ENCODE measurements at regions of chr3 and their contacts with region 1.

Region 1: GRCh38 chr3:123652346-123652984 is 67.6 kb upstream of the HACD2 start:
- DNase-seq: peak; percentile 76 to 91 (median 84)
- H3K4me3 ChIP-seq: no peak overlapping the region
- H3K27ac ChIP-seq: peak overlapping the region in 2 of 5 donors; percentile 67 to 80
- H3K4me1 ChIP-seq: peaks cover 4 to 10% of the 10 kb centered on the region in 2 donors
- H3K27me3 ChIP-seq: no peaks in the 10 kb centered on the region
- CTCF ChIP-seq: peak; percentile 77 to 94 (median 92)
- POLR2A ChIP-seq: no peak

Region 2: GRCh38 chr3:123480428-123480827 is 172.0 kb before region 1 on chr3:
- intact Hi-C with region 1: no loop called
- DNase-seq: no peak
- H3K4me3 ChIP-seq: no peak overlapping the region
- H3K27ac ChIP-seq: no peak overlapping the region
- H3K4me1 ChIP-seq: no peaks in the 10 kb centered on the region
- H3K27me3 ChIP-seq: no peaks in the 10 kb centered on the region
- CTCF ChIP-seq: no peak
- POLR2A ChIP-seq: no peak

Region 3: DNA sequence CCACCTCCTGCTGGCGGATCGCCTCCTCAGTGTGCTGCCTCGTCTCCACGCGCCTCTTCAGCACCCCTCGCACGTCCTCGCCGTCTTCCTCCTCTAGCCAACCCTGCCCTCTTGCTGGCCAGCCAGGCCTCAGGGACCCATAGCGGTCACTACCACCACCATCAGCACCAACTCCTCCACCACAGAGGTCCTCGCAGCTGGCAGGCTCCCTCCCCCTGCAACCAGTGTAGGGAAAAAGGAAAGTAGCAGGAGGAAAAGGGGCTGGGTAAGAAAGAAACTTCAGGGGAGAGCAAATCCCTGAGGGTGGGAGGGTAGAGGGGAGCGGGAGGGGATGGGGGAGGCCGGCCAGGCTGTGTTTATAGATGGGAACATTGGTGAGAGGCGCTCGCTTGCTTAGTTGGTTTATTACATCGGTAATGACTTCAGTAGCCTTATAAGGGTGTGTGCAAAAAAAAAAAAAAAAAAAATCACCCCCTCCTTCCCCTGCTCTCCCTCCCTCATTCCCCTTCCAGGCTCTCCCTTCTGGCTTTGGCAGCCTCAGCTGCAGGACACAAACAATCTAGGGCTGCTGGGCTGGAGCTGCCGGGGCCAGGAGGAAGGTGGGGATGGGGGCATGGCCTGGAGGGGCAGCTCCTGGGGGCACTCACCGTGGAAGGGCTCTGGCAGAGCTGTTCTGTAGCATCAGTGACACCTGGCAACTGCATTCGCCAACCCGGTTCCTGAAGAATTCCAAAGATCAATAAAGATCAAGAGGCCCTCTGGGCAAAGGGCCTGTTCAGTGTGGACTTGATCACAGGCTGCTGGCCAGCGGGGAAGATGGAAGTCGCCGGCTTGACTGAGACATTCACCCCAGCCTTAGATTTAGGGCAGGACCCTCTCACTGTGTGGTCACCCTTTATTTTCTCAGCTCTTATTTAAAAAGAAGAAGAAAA is 48.6 kb after region 1 on chr3:
- intact Hi-C with region 1: loop called (anchors 5 kb)
- DNase-seq: peak in 1 of 7 donors; percentile 43
- H3K4me3 ChIP-seq: peak overlapping the region in 1 of 4 donors; percentile 48
- H3K27ac ChIP-seq: peak overlapping the region in 3 of 5 donors; percentile 52 to 76 (median 62)
- H3K4me1 ChIP-seq: peaks cover 0 to 4% of the 10 kb centered on the region in 2 donors
- H3K27me3 ChIP-seq: no peaks in the 10 kb centered on the region
- CTCF ChIP-seq: no peak
- POLR2A ChIP-seq: no peak

Region 4: GRCh38 chr3:123723522-123724168 is 71.2 kb after region 1 on chr3:
- intact Hi-C with region 1: loop called in 1 of 2 experiments (anchors 5 kb)
- DNase-seq: peak; percentile 58 to 84 (median 67)
- H3K4me3 ChIP-seq: no peak overlapping the region
- H3K27ac ChIP-seq: no peak overlapping the region
- H3K4me1 ChIP-seq: peaks cover 0 to 4% of the 10 kb centered on the region in 2 donors
- H3K27me3 ChIP-seq: no peaks in the 10 kb centered on the region
- CTCF ChIP-seq: peak; percentile 68 to 78 (median 77)
- POLR2A ChIP-seq: no peak